ENCODE measurements at regions of chr20 and their contacts with region 1.

Region 1: GRCh38 chr20:1802385-1803060 is 92.7 kb upstream of the SIRPA start:
- DNase-seq: peak; percentile 81
- ATAC-seq: peak; percentile 90

Region 2: DNA sequence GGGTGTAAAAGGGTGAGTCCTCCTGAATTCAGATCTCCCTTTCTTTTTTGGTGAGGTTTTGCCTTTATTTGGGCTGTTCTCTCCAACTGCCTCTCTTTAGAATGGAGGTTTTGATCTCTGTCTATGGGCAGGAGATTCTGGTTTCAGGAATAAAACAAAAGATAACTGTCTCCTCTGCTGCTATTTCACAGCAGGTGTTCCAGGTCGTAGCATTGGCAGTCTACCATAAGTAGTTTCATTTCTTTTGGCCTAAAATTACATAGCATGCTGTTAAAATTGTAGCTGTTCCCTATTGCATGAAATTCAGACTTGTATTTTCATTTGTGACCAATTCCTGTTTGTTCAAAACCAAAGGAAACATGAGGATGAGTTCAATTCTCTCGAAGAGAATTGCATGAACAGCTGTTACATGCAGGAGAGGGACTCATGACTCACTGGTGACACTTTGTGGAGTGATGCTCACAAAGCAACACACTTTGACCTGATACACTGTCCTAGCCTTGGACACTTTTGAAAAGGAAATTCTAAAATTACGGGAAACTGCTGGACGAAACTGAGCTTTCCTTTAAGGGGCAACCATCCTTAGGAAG is 68.2 kb before region 1 on chr20:
- intact Hi-C with region 1: no loop called
- DNase-seq: no peak
- ATAC-seq: no peak

Region 3: GRCh38 chr20:1894951-1895673 is 92.6 kb after region 1 on chr20 and contains the start of gene SIRPA:
- intact Hi-C with region 1: loop called (anchors 10 kb)
- DNase-seq: peak; percentile 76
- ATAC-seq: peak; percentile 73
- total RNA-seq, gene SIRPA: 18.1 TPM